ENCODE measurements at regions of chr19 and their contacts with region 1.

Region 1: DNA sequence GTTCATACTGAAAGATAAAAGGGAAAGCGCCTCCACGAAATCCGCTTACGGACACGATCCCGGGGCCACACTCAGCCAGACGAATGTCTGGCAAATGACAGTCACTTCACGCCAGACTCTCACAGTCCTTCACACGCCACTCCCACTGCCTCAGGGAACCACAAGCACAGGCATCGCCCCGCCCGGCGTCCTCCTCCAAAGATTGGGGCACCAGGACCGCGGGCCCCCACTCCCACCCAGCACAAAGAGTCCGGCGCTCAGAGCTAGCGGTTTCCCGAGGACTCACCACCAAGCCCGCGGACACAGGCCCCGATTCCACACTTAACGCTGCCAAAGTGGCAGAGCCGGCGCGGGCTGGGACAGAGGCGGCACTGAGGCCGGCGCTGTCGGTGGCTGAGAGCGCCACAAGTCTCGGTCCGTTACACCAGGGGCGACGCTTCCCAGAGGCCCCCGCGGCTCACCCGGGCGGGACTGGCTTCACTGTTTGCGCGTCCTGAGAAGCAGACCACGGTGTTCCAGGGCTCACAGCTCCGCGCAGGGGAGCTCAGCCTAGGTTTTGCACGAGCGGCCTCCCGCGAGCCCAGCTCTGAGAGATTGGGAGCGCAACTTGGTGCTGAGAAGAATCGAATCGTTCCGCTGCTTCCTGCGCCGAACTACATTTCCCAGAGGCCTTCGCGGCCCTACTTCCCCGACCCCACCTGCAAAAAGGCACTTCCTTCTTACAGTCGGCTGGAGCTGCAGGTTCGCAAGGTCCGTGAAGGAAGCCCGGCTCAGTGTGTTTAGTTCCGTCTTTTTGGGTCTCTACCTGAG is at the start of gene ZNF569:
- DNase-seq: peak; percentile 93
- H3K4me3 ChIP-seq: peak within 1 kb of the TSS; percentile 62 to 86 (median 64)
- H3K27ac ChIP-seq: no peak within 1 kb of the TSS
- H3K4me1 ChIP-seq: no peaks in the 10 kb centered on the region
- H3K27me3 ChIP-seq: no peaks in the 10 kb centered on the region
- CTCF ChIP-seq: no peak
- total RNA-seq, gene ZNF569: 5.5 to 6.0 TPM

Region 2: DNA sequence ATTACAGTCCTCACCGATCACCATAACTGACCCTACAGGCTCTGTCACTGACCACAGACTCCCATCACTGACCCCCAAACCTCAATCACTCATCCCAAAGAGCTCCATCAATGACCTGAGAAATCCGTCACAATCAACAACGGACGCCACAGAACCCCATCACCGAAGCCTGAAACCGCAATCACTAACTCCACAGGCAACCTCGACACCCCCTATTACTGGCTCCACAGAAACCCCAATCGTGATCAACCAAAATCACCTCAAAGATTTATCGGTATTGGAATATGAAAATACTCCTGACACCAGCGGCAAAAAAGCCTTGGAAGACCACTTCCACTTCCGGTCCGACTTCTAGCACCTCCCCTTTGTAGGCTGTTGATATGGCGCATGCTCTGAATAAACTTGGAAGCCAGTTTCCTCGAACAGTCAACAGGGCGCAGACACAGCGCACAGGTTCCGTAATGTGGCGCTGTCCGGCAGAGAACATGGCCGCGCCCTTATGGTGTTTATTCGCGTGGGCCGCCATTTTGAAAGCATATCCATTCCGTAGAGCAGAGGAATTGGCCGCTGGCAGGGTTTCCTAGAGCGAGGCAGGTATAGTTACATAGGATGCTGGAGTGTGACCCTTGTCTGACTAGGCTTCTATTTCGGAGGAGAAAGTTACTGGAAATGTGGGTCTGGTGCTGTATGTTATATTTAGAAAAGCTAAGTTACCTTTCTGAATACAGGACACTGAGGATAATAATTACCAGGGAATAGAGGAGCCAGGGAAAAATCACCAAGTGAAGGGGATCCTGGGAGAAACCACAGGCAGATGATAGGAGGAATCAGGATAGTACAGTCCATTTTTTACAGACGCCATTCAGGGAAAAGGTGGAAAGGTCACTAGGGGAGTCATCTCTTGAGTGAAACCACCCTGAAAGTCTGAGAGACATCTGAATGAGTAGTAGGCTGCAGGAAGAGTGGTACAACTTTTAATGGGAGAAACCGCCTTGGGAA is 294.3 kb before region 1 on chr19 and contains the start of gene ZNF585A:
- CTCF ChIA-PET with region 1: no interaction called
- dilution Hi-C with region 1: no loop called
- in situ Hi-C with region 1: no loop called
- intact Hi-C with region 1: loop called (anchors 5 kb)
- DNase-seq: peak; percentile 95
- H3K4me3 ChIP-seq: peak within 1 kb of the TSS; percentile 51 to 97 (median 91)
- H3K27ac ChIP-seq: peak within 1 kb of the TSS; percentile 46
- H3K4me1 ChIP-seq: no peaks in the 10 kb centered on the region
- H3K27me3 ChIP-seq: no peaks in the 10 kb centered on the region
- CTCF ChIP-seq: peak in 1 of 2 donors; percentile 41
- total RNA-seq, gene ZNF585A: 10.4 to 13.7 TPM

Region 3: GRCh38 chr19:37370880-37371661 is 95.9 kb before region 1 on chr19 and contains the start of gene ZNF527:
- CTCF ChIA-PET with region 1: interaction called, 5 read pairs
- dilution Hi-C with region 1: no loop called
- in situ Hi-C with region 1: no loop called
- intact Hi-C with region 1: loop called (anchors 2 kb)
- DNase-seq: peak; percentile 96
- H3K4me3 ChIP-seq: peak within 1 kb of the TSS; percentile 76 to 82 (median 78)
- H3K27ac ChIP-seq: peak within 1 kb of the TSS; percentile 5
- H3K4me1 ChIP-seq: peaks cover 5% of the 10 kb centered on the region
- H3K27me3 ChIP-seq: no peaks in the 10 kb centered on the region
- CTCF ChIP-seq: no peak
- total RNA-seq, gene ZNF527: 3.2 to 6.5 TPM

Region 4: DNA sequence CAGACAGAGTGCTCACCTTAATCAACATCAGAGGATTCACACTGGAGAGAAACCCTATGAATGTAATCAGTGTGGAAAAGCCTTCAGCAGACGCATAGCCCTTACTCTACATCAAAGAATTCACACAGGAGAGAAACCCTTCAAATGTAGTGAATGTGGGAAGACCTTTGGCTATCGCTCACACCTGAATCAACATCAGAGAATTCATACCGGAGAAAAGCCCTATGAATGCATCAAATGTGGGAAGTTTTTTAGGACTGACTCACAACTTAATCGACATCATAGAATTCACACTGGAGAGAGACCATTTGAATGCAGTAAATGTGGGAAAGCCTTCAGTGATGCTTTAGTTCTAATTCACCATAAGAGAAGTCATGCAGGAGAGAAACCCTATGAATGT is 77.8 kb before region 1 on chr19:
- CTCF ChIA-PET with region 1: no interaction called
- dilution Hi-C with region 1: no loop called
- in situ Hi-C with region 1: no loop called
- intact Hi-C with region 1: no loop called
- DNase-seq: no peak
- H3K4me3 ChIP-seq: no peak overlapping the region
- H3K27ac ChIP-seq: no peak overlapping the region
- H3K4me1 ChIP-seq: no peaks in the 10 kb centered on the region
- H3K27me3 ChIP-seq: no peaks in the 10 kb centered on the region
- CTCF ChIP-seq: no peak

Region 5: GRCh38 chr19:37594304-37594981 is 127.4 kb after region 1 on chr19 and contains the starts of genes ZNF540 and ZNF571:
- CTCF ChIA-PET with region 1: no interaction called
- dilution Hi-C with region 1: no loop called
- in situ Hi-C with region 1: no loop called
- intact Hi-C with region 1: loop called (anchors 1 kb)
- DNase-seq: peak; percentile 98
- H3K4me3 ChIP-seq: peak within 1 kb of the TSS; percentile 62 to 81 (median 69)
- H3K27ac ChIP-seq: peak within 1 kb of the TSS; percentile 54
- H3K4me1 ChIP-seq: no peaks in the 10 kb centered on the region
- H3K27me3 ChIP-seq: no peaks in the 10 kb centered on the region
- CTCF ChIP-seq: no peak
- total RNA-seq, gene ZNF540: 0.73 to 1.5 TPM
- total RNA-seq, gene ZNF571: 3.8 to 5.3 TPM

Region 6: GRCh38 chr19:37719111-37719926 is 252.3 kb after region 1 on chr19 and contains the start of gene ZNF607:
- CTCF ChIA-PET with region 1: no interaction called
- dilution Hi-C with region 1: no loop called
- in situ Hi-C with region 1: no loop called
- intact Hi-C with region 1: loop called (anchors 5 kb)
- DNase-seq: peak; percentile 91
- H3K4me3 ChIP-seq: peak within 1 kb of the TSS; percentile 76 to 97 (median 88)
- H3K27ac ChIP-seq: peak within 1 kb of the TSS; percentile 52
- H3K4me1 ChIP-seq: no peaks in the 10 kb centered on the region
- H3K27me3 ChIP-seq: no peaks in the 10 kb centered on the region
- CTCF ChIP-seq: peak; percentile 48 to 71
- total RNA-seq, gene ZNF607: 8.3 to 9.0 TPM

Measured in mammary epithelial cell (primary cell).